CD4-positive, alpha-beta T cell (primary cell): ENCODE measurements at regions of chr5 and their contacts with region 1.

Region 1: GRCh38 chr5:32232441-32233219 is 58.5 kb upstream of the GOLPH3 start:
- DNase-seq: peak; percentile 59 to 85 (median 70)
- ATAC-seq: peak; percentile 87
- H3K4me3 ChIP-seq: no peak overlapping the region
- H3K4me3 Mint-ChIP-seq: no peak overlapping the region
- H3K27ac ChIP-seq: no peak overlapping the region
- H3K27ac Mint-ChIP-seq: peak overlapping the region; percentile 64
- H3K4me1 ChIP-seq: peaks cover 5% of the 10 kb centered on the region
- H3K4me1 Mint-ChIP-seq: peaks cover 5% of the 10 kb centered on the region
- H3K27me3 ChIP-seq: no peaks in the 10 kb centered on the region
- H3K27me3 Mint-ChIP-seq: no peaks in the 10 kb centered on the region
- CTCF ChIP-seq: peak; percentile 88

Region 2: GRCh38 chr5:32174011-32174870 is 58.4 kb before region 1 on chr5 and contains the start of gene GOLPH3:
- CTCF ChIA-PET with region 1: interaction called, 4 read pairs
- POLR2A ChIA-PET with region 1: interaction called, 10 read pairs
- intact Hi-C with region 1: loop called in 1 of 2 experiments (anchors 10 kb)
- DNase-seq: peak; percentile 84 to 94 (median 91)
- ATAC-seq: peak; percentile 84
- H3K4me3 ChIP-seq: peak within 1 kb of the TSS; percentile 90
- H3K4me3 Mint-ChIP-seq: peak within 1 kb of the TSS; percentile 99
- H3K27ac ChIP-seq: peak within 1 kb of the TSS; percentile 89 to 95
- H3K27ac Mint-ChIP-seq: peak within 1 kb of the TSS; percentile 95
- H3K4me1 ChIP-seq: peaks cover 18% of the 10 kb centered on the region
- H3K4me1 Mint-ChIP-seq: peaks cover 39% of the 10 kb centered on the region
- H3K27me3 ChIP-seq: no peaks in the 10 kb centered on the region
- H3K27me3 Mint-ChIP-seq: peaks cover 6% of the 10 kb centered on the region
- CTCF ChIP-seq: no peak
- total RNA-seq, gene GOLPH3: 52.0 to 55.4 TPM

Region 3: GRCh38 chr5:32329308-32329834 is 96.7 kb after region 1 on chr5:
- CTCF ChIA-PET with region 1: interaction called, 29 read pairs
- POLR2A ChIA-PET with region 1: interaction called, 5 read pairs
- intact Hi-C with region 1: loop called (anchors 1 kb)
- DNase-seq: peak; percentile 14 to 74 (median 42)
- ATAC-seq: peak; percentile 77
- H3K4me3 ChIP-seq: no peak overlapping the region
- H3K4me3 Mint-ChIP-seq: no peak overlapping the region
- H3K27ac ChIP-seq: no peak overlapping the region
- H3K27ac Mint-ChIP-seq: no peak overlapping the region
- H3K4me1 ChIP-seq: peaks cover 4% of the 10 kb centered on the region
- H3K4me1 Mint-ChIP-seq: no peaks in the 10 kb centered on the region
- H3K27me3 ChIP-seq: no peaks in the 10 kb centered on the region
- H3K27me3 Mint-ChIP-seq: no peaks in the 10 kb centered on the region
- CTCF ChIP-seq: peak; percentile 67

Region 4: GRCh38 chr5:32390819-32391591 is 158.4 kb after region 1 on chr5:
- CTCF ChIA-PET with region 1: no interaction called
- POLR2A ChIA-PET with region 1: no interaction called
- intact Hi-C with region 1: loop called in 1 of 2 experiments (anchors 5 kb)
- DNase-seq: peak in 2 of 14 experiments; percentile 29 to 44
- ATAC-seq: no peak
- H3K4me3 ChIP-seq: no peak overlapping the region
- H3K4me3 Mint-ChIP-seq: no peak overlapping the region
- H3K27ac ChIP-seq: no peak overlapping the region
- H3K27ac Mint-ChIP-seq: no peak overlapping the region
- H3K4me1 ChIP-seq: no peaks in the 10 kb centered on the region
- H3K4me1 Mint-ChIP-seq: no peaks in the 10 kb centered on the region
- H3K27me3 ChIP-seq: no peaks in the 10 kb centered on the region
- H3K27me3 Mint-ChIP-seq: no peaks in the 10 kb centered on the region
- CTCF ChIP-seq: no peak

Region 5: DNA sequence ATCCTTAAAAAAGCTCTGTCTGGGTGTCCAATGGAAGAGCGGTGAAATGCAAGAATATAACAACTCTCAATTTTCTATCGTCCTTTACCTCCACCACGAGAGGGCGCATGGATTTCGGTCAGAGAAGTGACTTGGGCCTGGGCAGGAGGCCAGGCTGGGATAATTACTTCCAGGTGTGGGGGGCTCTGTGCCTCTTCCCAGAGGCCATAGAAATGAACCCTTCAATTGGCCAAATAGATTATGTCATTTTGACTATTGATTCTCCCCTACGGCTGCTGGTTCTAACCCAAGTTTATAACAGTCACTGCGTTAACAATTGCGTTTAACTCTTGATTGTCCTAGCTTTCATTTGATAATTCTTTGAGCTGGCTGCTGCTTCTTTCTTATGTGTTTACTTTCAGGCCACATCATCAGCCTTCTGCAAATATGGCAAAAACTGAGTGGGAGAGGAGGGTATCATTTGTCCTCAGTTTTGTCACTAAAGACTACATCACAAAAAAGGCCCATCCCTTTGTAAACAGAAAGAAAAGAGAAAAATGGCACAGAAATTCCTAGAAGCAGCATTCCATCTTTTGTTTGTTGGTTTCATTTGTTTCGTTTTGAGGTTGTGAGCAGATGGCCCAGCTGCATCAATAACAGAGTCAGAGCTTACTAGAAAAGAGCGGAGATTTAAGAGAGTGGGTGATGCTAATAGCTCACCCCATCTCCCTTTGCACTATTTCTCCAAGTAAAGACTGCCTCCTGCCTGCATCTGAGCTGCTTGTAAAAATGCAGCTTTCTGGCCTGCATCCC is 257.4 kb after region 1 on chr5:
- CTCF ChIA-PET with region 1: no interaction called
- POLR2A ChIA-PET with region 1: no interaction called
- intact Hi-C with region 1: loop called in 1 of 2 experiments (anchors 10 kb)
- DNase-seq: peak; percentile 56 to 85 (median 66)
- ATAC-seq: peak; percentile 71
- H3K4me3 ChIP-seq: no peak overlapping the region
- H3K4me3 Mint-ChIP-seq: no peak overlapping the region
- H3K27ac ChIP-seq: no peak overlapping the region
- H3K27ac Mint-ChIP-seq: no peak overlapping the region
- H3K4me1 ChIP-seq: no peaks in the 10 kb centered on the region
- H3K4me1 Mint-ChIP-seq: no peaks in the 10 kb centered on the region
- H3K27me3 ChIP-seq: no peaks in the 10 kb centered on the region
- H3K27me3 Mint-ChIP-seq: no peaks in the 10 kb centered on the region
- CTCF ChIP-seq: peak; percentile 89

Region 6: GRCh38 chr5:32597041-32597629 is 364.5 kb after region 1 on chr5:
- CTCF ChIA-PET with region 1: no interaction called
- POLR2A ChIA-PET with region 1: no interaction called
- intact Hi-C with region 1: loop called in 1 of 2 experiments (anchors 5 kb)
- DNase-seq: no peak
- ATAC-seq: no peak
- H3K4me3 ChIP-seq: no peak overlapping the region
- H3K4me3 Mint-ChIP-seq: peak overlapping the region; percentile 7
- H3K27ac ChIP-seq: peak overlapping the region in 1 of 2 donors; percentile 13
- H3K27ac Mint-ChIP-seq: peak overlapping the region; percentile 78
- H3K4me1 ChIP-seq: peaks cover 11% of the 10 kb centered on the region
- H3K4me1 Mint-ChIP-seq: peaks cover 89% of the 10 kb centered on the region
- H3K27me3 ChIP-seq: no peaks in the 10 kb centered on the region
- H3K27me3 Mint-ChIP-seq: no peaks in the 10 kb centered on the region
- CTCF ChIP-seq: no peak

Region 7: DNA sequence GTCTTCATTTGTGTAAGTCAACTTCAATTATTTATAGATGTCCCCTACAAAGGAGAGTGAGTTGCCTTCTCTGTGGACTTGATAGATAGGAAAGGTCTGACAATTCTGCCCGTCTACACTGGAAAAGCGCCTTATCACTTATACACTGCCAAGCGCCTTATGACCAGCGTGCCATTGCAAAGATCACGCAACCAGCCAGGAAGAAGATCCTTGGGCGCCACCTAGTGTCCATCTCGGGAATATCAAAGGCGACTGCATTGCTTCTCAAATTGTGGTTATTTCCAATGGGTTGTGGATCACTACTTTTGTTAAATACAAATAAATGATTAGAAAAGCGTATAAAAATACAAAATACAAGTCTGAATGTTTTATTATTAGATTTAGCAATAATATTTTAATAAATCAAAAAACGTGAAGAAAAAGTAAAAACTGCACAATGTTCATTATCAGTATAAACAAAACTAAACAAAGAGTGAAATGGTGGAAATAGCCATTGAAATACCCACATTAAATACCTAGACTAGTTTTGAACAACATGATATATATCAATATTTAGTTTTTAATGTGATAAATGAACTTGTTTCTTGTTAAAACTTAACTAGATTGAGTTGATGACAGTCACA is 380.5 kb after region 1 on chr5:
- CTCF ChIA-PET with region 1: interaction called, 3 read pairs
- POLR2A ChIA-PET with region 1: no interaction called
- intact Hi-C with region 1: loop called (anchors 1 to 2 kb)
- DNase-seq: peak; percentile 72 to 89 (median 81)
- ATAC-seq: peak; percentile 91
- H3K4me3 ChIP-seq: no peak overlapping the region
- H3K4me3 Mint-ChIP-seq: no peak overlapping the region
- H3K27ac ChIP-seq: no peak overlapping the region
- H3K27ac Mint-ChIP-seq: no peak overlapping the region
- H3K4me1 ChIP-seq: no peaks in the 10 kb centered on the region
- H3K4me1 Mint-ChIP-seq: peaks cover 5% of the 10 kb centered on the region
- H3K27me3 ChIP-seq: no peaks in the 10 kb centered on the region
- H3K27me3 Mint-ChIP-seq: no peaks in the 10 kb centered on the region
- CTCF ChIP-seq: peak; percentile 95

Region 8: GRCh38 chr5:33565324-33565723 is 1332.7 kb after region 1 on chr5:
- CTCF ChIA-PET with region 1: no interaction called
- POLR2A ChIA-PET with region 1: no interaction called
- intact Hi-C with region 1: no loop called
- DNase-seq: no peak
- ATAC-seq: no peak
- H3K4me3 ChIP-seq: no peak overlapping the region
- H3K4me3 Mint-ChIP-seq: no peak overlapping the region
- H3K27ac ChIP-seq: no peak overlapping the region
- H3K27ac Mint-ChIP-seq: no peak overlapping the region
- H3K4me1 ChIP-seq: no peaks in the 10 kb centered on the region
- H3K4me1 Mint-ChIP-seq: no peaks in the 10 kb centered on the region
- H3K27me3 ChIP-seq: no peaks in the 10 kb centered on the region
- H3K27me3 Mint-ChIP-seq: no peaks in the 10 kb centered on the region
- CTCF ChIP-seq: no peak